Heart left ventricle (tissue), 16 donors: ENCODE measurements at regions of chr12 and their contacts with region 1.

Region 1: GRCh38 chr12:50992819-50993218 is 33.4 kb downstream of the SLC11A2 start:
- DNase-seq: peak in 3 of 5 donors; percentile 11 to 59 (median 26)
- ATAC-seq: peak in 3 of 4 donors; percentile 10 to 39 (median 22)
- H3K4me3 ChIP-seq: no peak overlapping the region
- H3K27ac ChIP-seq: no peak overlapping the region
- H3K4me1 ChIP-seq: peaks cover 0 to 5% (median 0%) of the 10 kb centered on the region in 12 donors
- H3K27me3 ChIP-seq: no peaks in the 10 kb centered on the region
- CTCF ChIP-seq: no peak
- POLR2A ChIP-seq: no peak

Region 2: GRCh38 chr12:50763639-50764285 is 229.1 kb before region 1 on chr12 and contains the start of gene ATF1:
- intact Hi-C with region 1: loop called in 3 of 10 experiments (anchors 5 kb)
- DNase-seq: peak; percentile 89 to 95 (median 93)
- ATAC-seq: peak; percentile 93 to 96 (median 95)
- H3K4me3 ChIP-seq: peak within 1 kb of the TSS; percentile 72 to 100 (median 98)
- H3K27ac ChIP-seq: peak within 1 kb of the TSS; percentile 95 to 99 (median 98)
- H3K4me1 ChIP-seq: peaks cover 3 to 48% (median 17%) of the 10 kb centered on the region in 12 donors
- H3K27me3 ChIP-seq: no peaks in the 10 kb centered on the region
- CTCF ChIP-seq: no peak
- POLR2A ChIP-seq: peak in 1 of 2 donors; percentile 64
- total RNA-seq, gene ATF1: 9.7 to 27.4 (median 22.3) TPM

Region 3: DNA sequence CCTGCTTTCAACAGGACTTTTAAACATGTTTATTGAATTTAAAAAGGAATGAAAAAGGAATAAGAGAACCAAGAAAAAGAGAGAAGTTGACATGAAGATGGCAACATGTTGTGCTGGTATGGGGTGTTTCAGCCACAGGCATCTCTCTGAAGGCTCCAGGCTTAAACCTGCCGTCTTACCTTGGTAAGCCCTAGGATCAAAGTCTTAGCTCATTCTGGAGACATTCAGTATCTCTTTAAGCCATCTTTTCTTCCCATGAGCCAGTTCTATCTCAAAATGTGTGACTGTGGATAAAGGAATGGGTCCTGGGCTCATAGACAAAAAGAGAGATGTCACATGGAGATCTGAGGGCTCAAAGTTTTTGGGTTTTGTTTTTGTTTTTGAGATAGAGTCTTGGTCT is 181.7 kb after region 1 on chr12:
- intact Hi-C with region 1: no loop called
- DNase-seq: no peak
- ATAC-seq: no peak
- H3K4me3 ChIP-seq: no peak overlapping the region
- H3K27ac ChIP-seq: peak overlapping the region in 1 of 12 donors; percentile 53
- H3K4me1 ChIP-seq: peaks cover 0 to 33% (median 16%) of the 10 kb centered on the region in 12 donors
- H3K27me3 ChIP-seq: no peaks in the 10 kb centered on the region
- CTCF ChIP-seq: no peak
- POLR2A ChIP-seq: no peak